Heart left ventricle (tissue), 16 donors: ENCODE measurements at regions of chr20 and their contacts with region 1.

Region 1: DNA sequence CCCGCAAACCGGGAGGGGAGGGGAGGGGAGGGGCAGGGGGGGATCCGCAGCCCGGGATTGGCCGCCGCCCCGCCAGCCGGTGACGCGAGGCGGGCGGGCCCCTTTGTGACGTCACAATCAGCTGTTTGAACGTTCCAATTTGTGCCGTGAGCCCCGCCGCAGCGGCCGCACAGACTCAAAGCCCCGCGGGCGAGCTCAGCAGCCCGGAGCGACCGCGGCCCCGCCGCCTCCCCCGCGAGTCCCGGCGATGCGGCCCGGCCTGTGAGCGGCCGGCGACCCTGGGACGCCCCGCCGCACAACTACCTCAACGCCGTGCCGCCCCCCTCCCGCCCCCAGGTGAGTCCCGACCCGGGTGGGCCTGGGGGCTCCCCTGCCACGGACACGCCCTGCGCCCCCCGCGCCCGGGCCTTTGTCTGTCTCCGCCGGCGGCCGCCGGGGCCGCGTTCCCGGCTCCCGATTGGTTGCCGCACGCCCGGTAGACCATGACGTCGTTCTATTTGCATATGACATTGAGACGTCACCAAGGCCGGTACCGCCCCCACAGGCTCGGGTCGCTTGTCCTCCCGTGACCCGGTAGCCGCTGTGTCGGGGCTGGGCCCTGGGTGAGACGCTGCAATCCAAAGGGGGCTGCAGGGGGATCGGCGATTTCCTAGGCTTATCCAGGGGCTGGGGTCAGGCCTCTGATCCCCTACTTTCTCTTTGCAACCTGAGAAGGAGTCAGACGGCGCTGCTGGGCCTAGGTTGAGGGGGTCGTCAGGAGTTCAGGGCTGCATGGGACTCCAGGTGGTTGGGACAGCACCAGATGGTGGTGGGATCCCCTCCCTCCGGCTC is at the start of gene TP53INP2:
- DNase-seq: peak; percentile 95 to 98 (median 96)
- ATAC-seq: peak; percentile 79 to 87 (median 83)
- H3K4me3 ChIP-seq: peak within 1 kb of the TSS; percentile 65 to 94 (median 82)
- H3K27ac ChIP-seq: peak within 1 kb of the TSS; percentile 92 to 100 (median 99)
- H3K4me1 ChIP-seq: peaks cover 0 to 53% (median 36%) of the 10 kb centered on the region in 12 donors
- H3K27me3 ChIP-seq: peaks cover 0 to 5% (median 0%) of the 10 kb centered on the region in 9 donors
- CTCF ChIP-seq: peak in 1 of 12 donors; percentile 18
- POLR2A ChIP-seq: peak; percentile 69 to 94
- total RNA-seq, gene TP53INP2: 70.4 to 176 (median 111) TPM

Region 2: GRCh38 chr20:34302723-34303528 is 401.5 kb before region 1 on chr20 and contains the start of gene AHCY:
- intact Hi-C with region 1: loop called in 2 of 10 experiments (anchors 5 to 10 kb)
- DNase-seq: peak; percentile 95 to 98 (median 97)
- ATAC-seq: peak; percentile 92 to 98 (median 97)
- H3K4me3 ChIP-seq: peak within 1 kb of the TSS; percentile 58 to 95 (median 74)
- H3K27ac ChIP-seq: peak within 1 kb of the TSS; percentile 70 to 98 (median 92)
- H3K4me1 ChIP-seq: peaks cover 0 to 34% (median 16%) of the 10 kb centered on the region in 12 donors
- H3K27me3 ChIP-seq: no peaks in the 10 kb centered on the region
- CTCF ChIP-seq: peak in 2 of 12 donors; percentile 12 to 19
- POLR2A ChIP-seq: peak in 1 of 2 donors; percentile 77
- total RNA-seq, gene AHCY: 48.3 to 132 (median 57.2) TPM

Region 3: GRCh38 chr20:34538671-34539123 is 165.7 kb before region 1 on chr20:
- intact Hi-C with region 1: loop called in 7 of 10 experiments (anchors 2 to 10 kb)
- DNase-seq: peak in 3 of 5 donors; percentile 26 to 63 (median 59)
- ATAC-seq: peak in 3 of 4 donors; percentile 43 to 65 (median 65)
- H3K4me3 ChIP-seq: no peak overlapping the region
- H3K27ac ChIP-seq: no peak overlapping the region
- H3K4me1 ChIP-seq: peaks cover 0 to 15% (median 6%) of the 10 kb centered on the region in 12 donors
- H3K27me3 ChIP-seq: no peaks in the 10 kb centered on the region
- CTCF ChIP-seq: peak; percentile 64 to 87 (median 75)
- POLR2A ChIP-seq: no peak

Region 4: GRCh38 chr20:34579191-34579978 is 125.0 kb before region 1 on chr20:
- intact Hi-C with region 1: loop called in 6 of 10 experiments (anchors 1 to 10 kb)
- DNase-seq: peak in 4 of 5 donors; percentile 51 to 82 (median 68)
- ATAC-seq: peak; percentile 85 to 92 (median 92)
- H3K4me3 ChIP-seq: no peak overlapping the region
- H3K27ac ChIP-seq: peak overlapping the region; percentile 44 to 93 (median 78)
- H3K4me1 ChIP-seq: peaks cover 0 to 59% (median 22%) of the 10 kb centered on the region in 12 donors
- H3K27me3 ChIP-seq: no peaks in the 10 kb centered on the region
- CTCF ChIP-seq: peak; percentile 23 to 68 (median 54)
- POLR2A ChIP-seq: no peak

Region 5: DNA sequence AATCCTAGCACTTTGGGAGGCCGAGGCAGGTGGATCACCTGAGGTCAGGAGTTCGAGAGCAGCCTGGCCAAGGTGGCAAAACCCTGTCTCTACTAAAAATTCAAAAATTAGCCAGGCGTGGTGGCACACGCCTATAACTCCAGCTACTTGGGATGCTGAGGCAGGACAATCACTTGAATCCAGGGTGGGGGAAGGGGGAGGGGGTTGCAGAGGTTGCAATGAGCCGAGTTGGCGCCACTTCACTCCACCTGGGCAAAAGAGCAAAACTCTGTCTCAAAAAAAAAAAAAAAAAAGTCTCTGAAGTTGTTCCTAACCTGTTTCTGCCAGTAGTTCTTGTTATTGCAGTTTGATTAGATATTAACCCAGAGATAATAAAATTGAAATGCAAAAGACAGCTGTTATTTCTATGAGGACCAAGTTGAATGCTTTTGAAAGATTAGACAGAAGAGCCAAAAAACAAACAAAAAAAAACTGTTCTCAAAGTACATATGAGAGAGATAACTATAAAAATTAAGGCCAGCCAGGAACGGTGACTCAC is 50.1 kb before region 1 on chr20:
- intact Hi-C with region 1: no loop called
- DNase-seq: no peak
- ATAC-seq: no peak
- H3K4me3 ChIP-seq: no peak overlapping the region
- H3K27ac ChIP-seq: no peak overlapping the region
- H3K4me1 ChIP-seq: no peaks in the 10 kb centered on the region
- H3K27me3 ChIP-seq: no peaks in the 10 kb centered on the region
- CTCF ChIP-seq: no peak
- POLR2A ChIP-seq: no peak

Region 6: GRCh38 chr20:34676642-34677373 is 27.6 kb before region 1 on chr20 and contains the start of gene PIGU:
- intact Hi-C with region 1: loop called in 4 of 10 experiments (anchors 1 to 2 kb)
- DNase-seq: peak; percentile 96 to 97 (median 97)
- ATAC-seq: peak; percentile 98 to 100 (median 100)
- H3K4me3 ChIP-seq: peak within 1 kb of the TSS; percentile 50 to 95 (median 79)
- H3K27ac ChIP-seq: peak within 1 kb of the TSS; percentile 23 to 88 (median 76)
- H3K4me1 ChIP-seq: peaks cover 0 to 20% (median 9%) of the 10 kb centered on the region in 12 donors
- H3K27me3 ChIP-seq: no peaks in the 10 kb centered on the region
- CTCF ChIP-seq: peak in 9 of 12 donors; percentile 14 to 52 (median 27)
- POLR2A ChIP-seq: peak in 1 of 2 donors; percentile 51
- total RNA-seq, gene PIGU: 10.8 to 20.8 (median 15.0) TPM

Region 7: DNA sequence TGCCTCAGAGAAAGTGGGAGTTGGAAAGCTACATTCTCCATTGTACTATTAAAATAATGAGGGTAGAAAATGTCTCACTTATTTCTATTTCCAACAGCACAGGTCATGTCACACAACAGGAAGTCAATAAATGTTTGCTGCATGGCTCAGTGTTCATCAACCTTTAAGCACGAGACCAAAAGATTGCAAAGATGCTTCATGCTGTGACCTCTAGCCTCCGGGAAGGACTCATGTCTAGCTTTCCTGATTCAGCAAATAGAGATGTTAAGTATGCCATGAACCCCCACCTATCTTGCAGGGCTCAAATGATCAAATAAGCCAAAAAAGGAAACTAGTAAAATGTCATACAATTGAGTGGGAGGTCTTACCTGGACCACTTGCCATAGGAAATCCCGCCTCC is 63.7 kb after region 1 on chr20:
- intact Hi-C with region 1: no loop called
- DNase-seq: no peak
- ATAC-seq: no peak
- H3K4me3 ChIP-seq: no peak overlapping the region
- H3K27ac ChIP-seq: no peak overlapping the region
- H3K4me1 ChIP-seq: peaks cover 0 to 10% (median 0%) of the 10 kb centered on the region in 12 donors
- H3K27me3 ChIP-seq: no peaks in the 10 kb centered on the region
- CTCF ChIP-seq: no peak
- POLR2A ChIP-seq: no peak

Region 8: DNA sequence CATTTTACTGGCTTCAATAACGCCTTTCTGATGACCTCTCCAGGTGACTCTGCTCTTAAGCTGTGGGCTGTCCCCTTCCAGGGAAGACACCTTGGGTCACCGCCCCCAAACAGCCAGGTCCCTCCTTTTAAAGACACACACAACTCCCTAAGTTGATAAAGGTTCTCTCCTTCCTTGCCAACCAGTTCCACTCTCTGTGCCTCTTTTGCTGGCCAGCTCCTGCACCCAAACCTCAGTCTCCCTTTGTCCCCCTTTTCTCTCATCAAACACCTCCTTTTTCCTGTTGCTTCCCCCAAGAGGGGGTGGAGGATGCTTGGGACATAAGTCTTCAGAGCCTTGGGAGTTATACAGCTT is 120.0 kb after region 1 on chr20:
- intact Hi-C with region 1: no loop called
- DNase-seq: peak in 4 of 5 donors; percentile 32 to 63 (median 56)
- ATAC-seq: peak; percentile 39 to 61 (median 56)
- H3K4me3 ChIP-seq: peak overlapping the region; percentile 72 to 99 (median 88)
- H3K27ac ChIP-seq: peak overlapping the region; percentile 89 to 97 (median 91)
- H3K4me1 ChIP-seq: peaks cover 3 to 52% (median 32%) of the 10 kb centered on the region in 12 donors
- H3K27me3 ChIP-seq: no peaks in the 10 kb centered on the region
- CTCF ChIP-seq: no peak
- POLR2A ChIP-seq: no peak

Region 9: DNA sequence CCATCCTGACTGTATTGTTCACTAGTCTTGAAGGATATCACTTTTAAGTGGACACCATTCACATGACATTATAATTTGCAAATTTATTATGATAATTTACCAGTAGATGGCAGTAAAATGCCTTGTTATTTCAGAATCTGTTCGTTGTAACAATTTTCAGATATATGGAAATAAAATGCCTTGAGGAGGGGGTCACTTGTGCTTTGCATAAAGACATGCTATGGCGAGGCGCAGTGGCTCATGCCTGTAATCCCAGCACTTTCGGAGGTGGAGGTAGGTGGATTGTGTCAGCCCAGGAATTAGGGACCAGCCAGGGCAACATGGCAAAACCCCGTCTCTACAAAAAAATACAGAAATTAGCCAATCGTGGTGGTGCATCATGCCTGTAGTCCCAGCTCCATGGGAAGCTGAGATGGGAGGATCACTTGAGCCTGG is 130.1 kb after region 1 on chr20:
- intact Hi-C with region 1: no loop called
- DNase-seq: no peak
- ATAC-seq: no peak
- H3K4me3 ChIP-seq: no peak overlapping the region
- H3K27ac ChIP-seq: no peak overlapping the region
- H3K4me1 ChIP-seq: no peaks in the 10 kb centered on the region
- H3K27me3 ChIP-seq: no peaks in the 10 kb centered on the region
- CTCF ChIP-seq: peak; percentile 34 to 64 (median 50)
- POLR2A ChIP-seq: no peak